ENCODE measurements at regions of chr1 and their contacts with region 1.

Region 1: GRCh38 chr1:51878616-51879336 is at the start of gene NRDC:
- DNase-seq: peak; percentile 99 to 100
- H3K4me3 ChIP-seq: peak within 1 kb of the TSS; percentile 71 to 83
- H3K27ac ChIP-seq: peak within 1 kb of the TSS; percentile 94 to 99
- H3K4me1 ChIP-seq: peaks cover 5 to 27% of the 10 kb centered on the region in 2 donors
- H3K27me3 ChIP-seq: no peaks in the 10 kb centered on the region
- CTCF ChIP-seq: no peak
- total RNA-seq, gene NRDC: 40.0 TPM

Region 2: DNA sequence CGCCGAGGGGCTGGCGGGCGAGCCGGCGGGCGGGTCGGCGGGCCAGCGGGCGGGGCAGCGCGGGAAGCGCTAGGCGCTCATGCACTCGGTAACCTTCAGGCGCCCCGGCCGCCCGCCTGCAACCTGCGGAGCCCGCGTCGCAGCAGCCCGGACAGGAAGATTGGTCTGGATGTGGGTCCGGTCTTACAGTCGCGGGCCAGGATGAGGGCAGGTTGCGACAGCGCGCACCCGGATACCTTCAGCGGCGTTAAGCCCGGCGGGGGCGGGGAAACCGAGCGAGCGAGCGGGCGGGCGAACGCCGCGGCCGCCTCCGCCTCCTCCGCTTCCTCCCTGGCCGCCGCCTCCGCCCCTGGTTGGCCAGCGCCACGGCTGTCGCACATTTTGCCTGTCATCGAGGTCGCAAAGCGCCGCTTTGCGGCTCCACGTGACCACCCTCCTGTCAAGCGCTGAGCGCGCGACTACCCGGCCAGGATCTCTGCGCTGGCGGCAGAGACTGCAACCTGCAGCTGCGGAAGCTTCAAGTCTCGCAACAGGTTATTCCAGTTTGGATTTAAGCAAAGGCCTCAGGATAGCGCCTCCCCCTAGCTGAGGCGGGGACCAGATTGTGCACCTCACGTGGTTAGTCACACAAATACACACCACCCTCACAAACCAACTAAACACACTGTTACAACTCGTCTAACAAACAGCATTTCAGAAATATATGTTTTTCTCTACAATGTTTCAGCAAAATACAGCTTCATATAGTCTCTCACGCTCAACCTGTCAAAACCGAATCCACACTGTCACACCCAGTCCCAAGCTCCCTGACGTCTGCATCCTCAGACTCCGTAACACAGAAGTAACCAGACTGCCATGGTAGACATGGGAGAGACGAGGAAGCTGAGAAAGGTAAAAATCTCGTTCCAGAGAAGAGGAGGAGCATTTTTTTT is 918.6 kb before region 1 on chr1 and contains the start of gene FAF1:
- intact Hi-C with region 1: loop called (anchors 5 kb)
- DNase-seq: peak; percentile 83 to 98
- H3K4me3 ChIP-seq: peak within 1 kb of the TSS; percentile 92 to 94
- H3K27ac ChIP-seq: peak within 1 kb of the TSS; percentile 77 to 79
- H3K4me1 ChIP-seq: peaks cover 0 to 11% of the 10 kb centered on the region in 2 donors
- H3K27me3 ChIP-seq: no peaks in the 10 kb centered on the region
- CTCF ChIP-seq: peak in 1 of 3 experiments; percentile 25
- total RNA-seq, gene FAF1: 16.4 TPM

Region 3: GRCh38 chr1:52904927-52905698 is 1026.3 kb after region 1 on chr1:
- intact Hi-C with region 1: no loop called
- DNase-seq: no peak
- H3K4me3 ChIP-seq: no peak overlapping the region
- H3K27ac ChIP-seq: peak overlapping the region; percentile 55 to 64
- H3K4me1 ChIP-seq: peaks cover 0 to 7% of the 10 kb centered on the region in 2 donors
- H3K27me3 ChIP-seq: no peaks in the 10 kb centered on the region
- CTCF ChIP-seq: peak in 2 of 3 experiments; percentile 11 to 16